IMR-90 (cell line): ENCODE measurements at regions of chr6 and their contacts with region 1.

Region 1: DNA sequence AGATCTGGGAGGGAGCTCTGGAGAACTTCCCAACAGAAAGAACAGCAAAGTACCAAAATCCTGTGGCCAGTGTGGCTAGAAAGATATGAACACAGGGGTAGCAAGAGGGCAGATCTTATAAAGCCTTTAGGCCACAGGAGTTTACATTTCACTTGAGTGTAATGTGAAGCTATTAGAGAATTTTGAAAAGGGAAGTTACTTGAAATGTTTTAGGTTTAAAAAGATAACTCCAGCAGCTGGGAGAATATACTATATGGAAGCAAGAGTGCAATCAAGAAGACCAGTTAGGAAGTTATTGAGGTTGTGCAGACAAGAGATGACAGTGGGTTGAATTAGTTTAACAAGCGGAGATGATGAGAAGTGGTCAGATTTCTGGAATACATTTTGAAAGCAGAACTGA is 7.9 kb downstream of the SUPT3H start:
- DNase-seq: peak; percentile 29
- ATAC-seq: peak; percentile 56
- H3K4me3 ChIP-seq: no peak overlapping the region
- H3K27ac ChIP-seq: no peak overlapping the region
- H3K4me1 ChIP-seq: no peaks in the 10 kb centered on the region; the same call in none of the 2 replicates
- H3K27me3 ChIP-seq: no peaks in the 10 kb centered on the region
- CTCF ChIP-seq: no peak
- POLR2A ChIP-seq: no peak
- RAD21 ChIP-seq: no peak

Region 2: GRCh38 chr6:45327956-45328522 is 41.8 kb before region 1 on chr6 and contains the start of gene RUNX2:
- CTCF ChIA-PET with region 1: no interaction called
- POLR2A ChIA-PET with region 1: no interaction called
- dilution Hi-C with region 1: no loop called
- in situ Hi-C with region 1: no loop called
- intact Hi-C with region 1: loop called (anchors 5 kb)
- DNase-seq: peak; percentile 87
- ATAC-seq: peak; percentile 85
- H3K4me3 ChIP-seq: no peak within 1 kb of the TSS
- H3K27ac ChIP-seq: peak within 1 kb of the TSS; percentile 55; the same call in 1 of the 2 replicates
- H3K4me1 ChIP-seq: peaks cover 4% of the 10 kb centered on the region
- H3K27me3 ChIP-seq: no peaks in the 10 kb centered on the region
- CTCF ChIP-seq: no peak
- POLR2A ChIP-seq: no peak
- RAD21 ChIP-seq: no peak
- total RNA-seq, gene RUNX2: 2.3 and 3.1 TPM in 2 replicates